Heart left ventricle (tissue), 16 donors: ENCODE measurements at regions of chr16 and their contacts with region 1.

Region 1: DNA sequence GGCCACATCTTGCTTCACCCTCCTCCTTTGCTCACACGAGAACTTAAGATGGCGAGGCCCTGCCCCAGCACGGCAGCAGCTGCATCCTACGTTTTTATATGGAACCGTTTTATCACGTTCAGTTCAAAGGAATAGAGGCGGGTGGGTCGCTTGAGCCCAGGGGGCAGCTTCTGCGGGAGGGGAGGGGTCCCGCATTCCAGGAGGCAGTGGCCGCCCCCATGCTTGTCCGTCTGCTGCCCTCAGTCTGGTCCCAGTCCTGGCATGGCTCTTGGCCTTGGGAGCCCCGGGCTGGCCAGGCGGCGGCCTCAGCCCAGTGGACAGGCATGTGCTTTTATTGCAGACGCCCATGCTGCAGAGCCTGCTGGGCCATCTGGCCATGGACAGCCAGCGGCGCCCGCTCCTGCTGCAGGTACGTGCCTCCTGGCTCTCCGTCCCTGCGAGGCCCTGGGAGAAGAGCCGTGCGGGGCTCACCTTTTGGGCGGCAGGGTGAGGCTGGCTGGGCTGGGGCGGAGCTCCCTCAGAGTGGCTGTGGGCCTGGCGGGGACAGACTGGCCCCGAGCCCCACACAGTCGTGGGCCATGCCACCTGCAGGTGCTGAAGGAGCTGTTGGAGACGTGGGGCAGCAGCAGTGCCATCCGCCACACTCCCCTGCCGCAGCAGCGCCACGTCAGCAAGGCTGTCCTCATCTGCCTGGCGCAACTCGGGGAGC is 6.8 kb downstream of the TELO2 start:
- DNase-seq: no peak
- ATAC-seq: no peak
- H3K4me3 ChIP-seq: no peak overlapping the region
- H3K27ac ChIP-seq: no peak overlapping the region
- H3K4me1 ChIP-seq: peaks cover 0 to 9% (median 6%) of the 10 kb centered on the region in 12 donors
- H3K27me3 ChIP-seq: no peaks in the 10 kb centered on the region
- CTCF ChIP-seq: no peak
- POLR2A ChIP-seq: no peak

Region 2: DNA sequence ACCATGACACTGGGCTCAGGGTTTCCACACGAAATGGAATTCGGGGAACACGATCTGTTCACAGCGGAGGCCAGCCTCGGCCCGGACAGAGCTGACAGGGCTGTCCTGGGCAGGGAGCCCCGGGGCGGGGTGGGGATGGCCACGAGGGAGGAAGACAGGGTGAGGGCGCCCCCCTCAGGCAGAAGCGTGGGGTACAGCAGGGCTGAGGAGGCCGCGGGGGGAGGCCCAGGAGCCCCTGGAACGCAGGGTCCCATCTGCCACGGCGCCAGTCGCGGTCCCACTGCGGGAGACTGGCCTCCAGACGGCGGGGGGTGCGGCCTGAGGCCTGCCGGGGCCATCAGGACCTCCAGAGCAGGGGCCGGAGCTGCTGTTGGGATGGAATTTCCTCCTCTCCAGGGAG is 605.1 kb before region 1 on chr16:
- intact Hi-C with region 1: no loop called
- DNase-seq: peak in 1 of 5 donors; percentile 59
- ATAC-seq: no peak
- H3K4me3 ChIP-seq: no peak overlapping the region
- H3K27ac ChIP-seq: no peak overlapping the region
- H3K4me1 ChIP-seq: peaks cover 0 to 10% (median 0%) of the 10 kb centered on the region in 12 donors
- H3K27me3 ChIP-seq: no peaks in the 10 kb centered on the region
- CTCF ChIP-seq: no peak
- POLR2A ChIP-seq: no peak

Region 3: DNA sequence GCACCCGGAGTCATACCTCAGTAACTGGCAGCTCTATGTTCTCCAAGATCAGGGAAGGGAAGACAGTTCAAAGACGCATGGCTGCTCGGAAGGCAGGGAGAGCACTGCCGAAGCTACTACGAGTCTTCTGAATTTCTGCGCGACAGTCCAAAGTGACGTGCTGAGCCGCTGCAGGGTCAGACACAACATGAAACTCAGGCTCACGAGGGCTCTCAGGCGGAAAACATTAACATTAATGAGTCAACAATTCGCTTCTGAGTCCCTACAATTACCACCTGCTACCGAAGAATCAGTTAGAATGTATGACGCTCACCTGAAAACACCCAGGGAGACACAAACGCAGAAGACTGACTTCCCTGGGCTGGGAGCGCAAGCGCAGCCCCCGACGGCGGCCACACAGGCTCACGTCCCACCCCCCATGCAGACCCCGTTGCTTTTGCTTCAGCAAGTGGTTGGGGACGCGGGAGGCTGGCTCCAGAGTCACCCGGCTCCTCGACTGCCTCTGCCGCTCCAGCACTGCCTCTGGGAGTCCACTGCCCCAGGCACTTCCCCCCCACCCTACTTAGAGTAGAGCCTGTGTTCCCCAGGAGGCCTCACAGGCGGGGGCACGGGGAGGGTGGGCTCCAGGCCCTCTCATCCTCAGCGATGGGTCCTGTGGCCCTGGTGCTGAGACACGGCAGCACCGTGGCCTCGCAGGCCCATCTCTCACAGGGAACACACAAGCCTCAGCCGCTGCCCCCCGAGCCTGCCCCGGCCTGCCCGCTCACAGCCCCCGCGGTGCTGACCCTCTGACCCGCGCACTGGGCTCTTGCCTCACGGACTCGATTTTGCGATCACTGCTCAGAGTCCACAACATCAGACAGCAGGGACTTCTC is 568.0 kb before region 1 on chr16:
- intact Hi-C with region 1: no loop called
- DNase-seq: peak in 3 of 5 donors; percentile 8 to 54 (median 26)
- ATAC-seq: no peak
- H3K4me3 ChIP-seq: no peak overlapping the region
- H3K27ac ChIP-seq: no peak overlapping the region
- H3K4me1 ChIP-seq: no peaks in the 10 kb centered on the region
- H3K27me3 ChIP-seq: no peaks in the 10 kb centered on the region
- CTCF ChIP-seq: no peak
- POLR2A ChIP-seq: no peak

Region 4: GRCh38 chr16:1527836-1528811 is 28.2 kb after region 1 on chr16:
- intact Hi-C with region 1: loop called in 1 of 10 experiments (anchors 1 kb)
- DNase-seq: peak; percentile 69 to 85 (median 82)
- ATAC-seq: peak; percentile 7 to 20 (median 10)
- H3K4me3 ChIP-seq: no peak overlapping the region
- H3K27ac ChIP-seq: peak overlapping the region in 11 of 12 donors; percentile 11 to 99 (median 34)
- H3K4me1 ChIP-seq: peaks cover 14 to 66% (median 55%) of the 10 kb centered on the region in 12 donors
- H3K27me3 ChIP-seq: no peaks in the 10 kb centered on the region
- CTCF ChIP-seq: no peak
- POLR2A ChIP-seq: peak in 1 of 2 donors; percentile 38

Region 5: DNA sequence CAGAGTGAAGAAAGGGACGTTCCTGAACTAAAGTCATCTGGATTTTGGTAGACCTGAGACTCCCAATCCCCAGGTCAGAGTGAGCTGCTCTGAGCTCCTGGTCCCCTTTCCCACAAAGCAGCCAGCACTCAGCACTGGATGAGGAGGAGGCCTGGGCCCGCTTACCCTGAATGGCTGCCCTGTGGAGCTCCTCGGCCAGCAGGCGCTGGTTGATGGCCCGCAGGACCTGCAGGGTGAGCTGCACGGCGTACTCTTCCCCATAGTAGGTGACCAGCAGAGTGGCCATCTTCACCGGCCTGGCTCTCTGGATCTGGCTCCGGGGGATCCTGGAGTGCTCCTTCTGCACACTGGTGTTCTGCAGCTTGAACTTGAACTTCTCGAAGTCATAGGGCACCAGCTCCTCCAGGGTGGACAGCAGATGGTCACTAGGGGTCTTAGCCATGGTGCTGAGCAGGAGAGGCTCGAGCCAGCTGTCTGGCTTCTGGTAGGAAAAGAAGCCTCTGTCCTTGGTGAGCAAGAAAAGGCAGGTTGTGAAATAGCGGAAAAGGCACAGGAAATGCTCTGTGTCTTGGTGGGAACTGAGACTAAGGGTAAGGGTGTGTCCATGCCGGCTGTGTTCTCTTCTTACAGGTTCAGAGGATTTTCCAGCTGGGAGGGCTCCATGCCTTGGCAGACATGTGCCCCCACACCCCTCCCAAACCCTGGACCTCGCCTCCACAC is 1756.4 kb after region 1 on chr16 and contains the start of gene MEFV:
- intact Hi-C with region 1: no loop called
- DNase-seq: peak in 1 of 5 donors; percentile 24
- ATAC-seq: peak in 3 of 4 donors; percentile 40 to 77 (median 51)
- H3K4me3 ChIP-seq: peak within 1 kb of the TSS in 4 of 12 donors; percentile 1 to 53 (median 14)
- H3K27ac ChIP-seq: peak within 1 kb of the TSS in 1 of 12 donors; percentile 82
- H3K4me1 ChIP-seq: peaks cover 0 to 33% (median 0%) of the 10 kb centered on the region in 12 donors
- H3K27me3 ChIP-seq: peaks cover 0 to 20% (median 0%) of the 10 kb centered on the region in 9 donors
- CTCF ChIP-seq: no peak
- POLR2A ChIP-seq: no peak
- total RNA-seq, gene MEFV: 0.39 to 4.3 (median 0.91) TPM